ENCODE measurements at regions of chr2 and their contacts with region 1.

Region 1: DNA sequence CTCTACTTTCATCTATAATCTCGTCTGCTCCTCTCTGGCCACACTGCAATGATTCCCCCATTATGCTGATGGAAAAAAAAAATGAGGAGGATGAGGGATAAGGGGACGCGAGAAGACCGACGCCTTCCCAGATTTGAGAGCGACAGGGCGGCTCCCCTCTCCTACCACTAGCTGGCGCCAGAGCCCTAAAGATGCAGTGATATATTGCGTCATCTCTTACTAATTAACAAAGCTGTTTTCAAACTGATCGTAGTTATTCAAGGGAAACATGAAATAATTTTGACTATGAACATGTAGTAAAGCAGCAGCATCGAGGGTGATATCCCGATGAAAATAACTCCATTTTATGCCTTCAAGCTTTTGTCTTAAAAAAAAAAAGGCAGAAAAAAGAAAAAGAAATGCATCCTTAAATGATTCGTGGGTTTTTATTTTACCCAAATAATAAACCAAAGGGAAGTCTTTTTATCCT is 48.0 kb upstream of the HNRNPA3 start:
- DNase-seq: peak; percentile 84
- ATAC-seq: peak; percentile 76
- H3K4me3 ChIP-seq: peak overlapping the region; percentile 32 to 57
- H3K27ac ChIP-seq: peak overlapping the region; percentile 99
- H3K4me1 ChIP-seq: peaks cover 50% of the 10 kb centered on the region
- H3K27me3 ChIP-seq: no peaks in the 10 kb centered on the region
- CTCF ChIP-seq: peak; percentile 100

Region 2: DNA sequence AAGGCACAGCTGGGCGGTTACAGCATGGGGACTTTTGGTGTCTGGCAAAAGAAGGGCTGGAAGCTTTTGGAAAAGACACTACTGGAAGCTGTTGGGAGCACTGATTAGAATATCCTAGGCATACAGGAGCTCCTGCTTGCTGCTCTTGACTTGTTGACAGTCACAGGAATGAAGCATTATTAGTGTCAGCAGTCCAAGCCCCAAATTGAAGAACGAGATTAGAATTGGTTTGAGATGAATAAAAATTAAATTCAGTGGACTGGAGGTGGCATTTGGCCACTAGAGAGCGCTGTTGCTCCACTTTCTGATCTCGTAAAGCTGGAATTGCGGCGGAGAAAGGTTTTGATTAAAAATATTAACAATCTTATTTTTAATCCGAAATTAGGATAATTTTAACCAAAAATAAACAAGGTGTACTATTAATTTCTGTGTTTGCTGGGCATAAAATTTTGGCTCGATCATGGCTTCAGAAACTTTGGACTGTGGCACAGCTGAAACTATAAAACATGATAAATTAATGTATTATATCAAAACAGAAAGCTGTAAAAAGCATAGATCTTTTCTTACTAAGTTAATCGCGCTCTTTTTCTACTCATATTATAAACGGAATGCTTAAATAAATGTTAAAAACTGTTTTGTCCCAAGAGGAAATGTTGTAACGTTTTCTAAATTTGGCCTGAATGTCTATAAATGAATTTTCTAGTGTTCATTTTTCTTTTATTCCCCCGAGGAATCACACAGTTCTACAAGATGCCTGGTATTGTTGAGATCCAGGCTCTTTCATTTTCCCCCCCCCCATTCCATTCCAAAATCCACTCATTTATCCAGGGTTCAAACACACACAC is 1037.5 kb before region 1 on chr2:
- CTCF ChIA-PET with region 1: no interaction called
- POLR2A ChIA-PET with region 1: no interaction called
- in situ Hi-C with region 1: no loop called
- intact Hi-C with region 1: loop called (anchors 5 kb)
- DNase-seq: no peak
- ATAC-seq: peak; percentile 72; the same call in 1 of the 2 replicates
- H3K4me3 ChIP-seq: peak overlapping the region in 1 of 2 experiments; percentile 25; a peak in 1 of 4 replicates
- H3K27ac ChIP-seq: no peak overlapping the region
- H3K4me1 ChIP-seq: peaks cover 7% of the 10 kb centered on the region
- H3K27me3 ChIP-seq: no peaks in the 10 kb centered on the region
- CTCF ChIP-seq: peak; percentile 87

Region 3: GRCh38 chr2:177188482-177189469 is 24.2 kb after region 1 on chr2:
- CTCF ChIA-PET with region 1: no interaction called
- POLR2A ChIA-PET with region 1: no interaction called
- in situ Hi-C with region 1: no loop called
- intact Hi-C with region 1: no loop called
- DNase-seq: no peak
- ATAC-seq: no peak
- H3K4me3 ChIP-seq: no peak overlapping the region
- H3K27ac ChIP-seq: no peak overlapping the region
- H3K4me1 ChIP-seq: no peaks in the 10 kb centered on the region; the same call in 1 of the 2 replicates
- H3K27me3 ChIP-seq: no peaks in the 10 kb centered on the region
- CTCF ChIP-seq: no peak

Region 4: GRCh38 chr2:177263451-177264208 is 99.0 kb after region 1 on chr2:
- CTCF ChIA-PET with region 1: interaction called, 16 read pairs
- POLR2A ChIA-PET with region 1: interaction called, 4 read pairs
- in situ Hi-C with region 1: no loop called
- intact Hi-C with region 1: loop called (anchors 2 kb)
- DNase-seq: peak; percentile 86
- ATAC-seq: peak; percentile 71
- H3K4me3 ChIP-seq: peak overlapping the region; percentile 69 to 75
- H3K27ac ChIP-seq: peak overlapping the region; percentile 94
- H3K4me1 ChIP-seq: peaks cover 47% of the 10 kb centered on the region
- H3K27me3 ChIP-seq: no peaks in the 10 kb centered on the region
- CTCF ChIP-seq: peak; percentile 93

Region 5: GRCh38 chr2:177332041-177332991 is 167.7 kb after region 1 on chr2:
- CTCF ChIA-PET with region 1: interaction called, 6 read pairs
- POLR2A ChIA-PET with region 1: interaction called, 3 read pairs
- in situ Hi-C with region 1: no loop called
- intact Hi-C with region 1: loop called (anchors 1 kb)
- DNase-seq: peak; percentile 46
- ATAC-seq: peak; percentile 80
- H3K4me3 ChIP-seq: no peak overlapping the region
- H3K27ac ChIP-seq: peak overlapping the region; percentile 69
- H3K4me1 ChIP-seq: peaks cover 14% of the 10 kb centered on the region
- H3K27me3 ChIP-seq: no peaks in the 10 kb centered on the region
- CTCF ChIP-seq: peak; percentile 77

Region 6: DNA sequence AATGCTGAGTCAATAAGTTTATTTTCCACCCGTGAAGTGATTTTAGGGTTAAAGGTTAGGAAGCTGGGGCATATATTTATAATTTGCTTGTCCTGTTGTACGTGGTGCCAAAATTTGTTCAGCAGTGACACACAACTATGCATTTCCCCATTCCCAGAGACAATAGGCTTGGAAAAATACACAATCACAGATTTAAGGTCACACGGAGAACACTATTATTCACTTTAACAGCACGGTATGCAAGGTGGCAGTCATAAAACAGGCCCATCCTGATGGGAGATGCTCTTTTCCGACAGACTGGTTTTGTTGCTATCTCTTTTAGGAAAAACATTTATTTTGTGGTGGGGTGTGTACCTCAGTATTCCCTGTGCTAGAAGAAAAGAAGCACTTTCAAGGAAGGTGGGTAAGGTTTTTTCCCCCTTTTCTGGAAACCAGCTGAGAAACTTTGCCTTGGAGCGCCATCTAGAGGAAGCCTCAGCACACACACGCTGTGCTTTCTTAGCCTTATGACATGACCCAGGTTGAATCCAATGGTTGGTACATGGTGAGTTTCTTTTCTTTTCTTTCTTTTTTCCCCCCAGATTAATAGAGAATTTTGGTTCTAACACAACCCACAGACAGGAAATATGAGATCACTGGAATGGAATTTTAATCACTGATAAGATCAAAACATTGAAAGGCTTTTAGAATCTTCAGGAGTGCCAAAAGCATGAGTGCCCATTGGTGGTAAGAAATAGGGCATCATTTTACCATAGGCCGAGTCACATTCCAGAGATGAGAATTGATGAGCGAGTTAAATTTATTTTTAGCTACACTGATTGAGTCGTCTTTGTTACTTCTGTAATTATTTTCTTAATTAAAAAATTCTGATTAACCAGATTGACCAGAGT is 560.0 kb after region 1 on chr2:
- CTCF ChIA-PET with region 1: interaction called, 3 read pairs
- POLR2A ChIA-PET with region 1: no interaction called
- in situ Hi-C with region 1: no loop called
- intact Hi-C with region 1: loop called (anchors 10 kb)
- DNase-seq: peak; percentile 50
- ATAC-seq: peak; percentile 91
- H3K4me3 ChIP-seq: no peak overlapping the region
- H3K27ac ChIP-seq: no peak overlapping the region
- H3K4me1 ChIP-seq: no peaks in the 10 kb centered on the region
- H3K27me3 ChIP-seq: peaks cover 3% of the 10 kb centered on the region; the same call in 1 of the 2 replicates
- CTCF ChIP-seq: peak; percentile 92

Measured in Panc1 (cell line).